Psoas muscle (tissue), 8 donors: ENCODE measurements at regions of chr1 and their contacts with region 1.

Region 1: GRCh38 chr1:231442735-231443134 is 20.6 kb upstream of the EGLN1 start:
- DNase-seq: no peak
- ATAC-seq: peak; percentile 71 to 96 (median 87)
- H3K4me3 ChIP-seq: no peak overlapping the region
- H3K27ac ChIP-seq: no peak overlapping the region
- H3K4me1 ChIP-seq: no peaks in the 10 kb centered on the region
- H3K27me3 ChIP-seq: no peaks in the 10 kb centered on the region
- CTCF ChIP-seq: no peak

Region 2: GRCh38 chr1:230948301-230948700 is 494.4 kb before region 1 on chr1:
- intact Hi-C with region 1: no loop called
- DNase-seq: no peak
- ATAC-seq: no peak
- H3K4me3 ChIP-seq: no peak overlapping the region
- H3K27ac ChIP-seq: no peak overlapping the region
- H3K4me1 ChIP-seq: no peaks in the 10 kb centered on the region
- H3K27me3 ChIP-seq: no peaks in the 10 kb centered on the region
- CTCF ChIP-seq: no peak

Region 3: DNA sequence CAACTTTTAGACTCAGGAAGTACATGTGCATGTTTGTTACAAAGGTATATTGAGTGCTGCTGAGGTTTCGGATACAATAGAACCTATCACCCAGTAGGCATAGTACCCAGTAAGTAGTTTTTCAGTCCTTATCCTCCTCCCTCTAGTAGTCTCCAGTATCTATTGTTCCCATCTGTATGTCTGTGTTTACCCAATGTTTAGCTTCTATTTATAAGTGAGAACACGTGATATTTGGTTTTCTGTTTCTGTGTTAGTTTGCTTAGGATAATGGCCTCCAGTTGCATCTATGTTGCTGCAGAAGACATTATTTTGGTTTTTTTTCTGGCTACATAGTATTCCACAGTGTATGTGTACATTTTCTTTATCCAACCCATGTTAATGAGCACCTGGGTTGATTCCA is 38.6 kb after region 1 on chr1:
- intact Hi-C with region 1: loop called in 1 of 2 experiments (anchors 5 kb)
- DNase-seq: no peak
- ATAC-seq: no peak
- H3K4me3 ChIP-seq: no peak overlapping the region
- H3K27ac ChIP-seq: no peak overlapping the region
- H3K4me1 ChIP-seq: no peaks in the 10 kb centered on the region
- H3K27me3 ChIP-seq: no peaks in the 10 kb centered on the region
- CTCF ChIP-seq: no peak

Region 4: GRCh38 chr1:231497629-231498152 is 55.0 kb after region 1 on chr1:
- intact Hi-C with region 1: loop called in 1 of 2 experiments (anchors 5 kb)
- DNase-seq: no peak
- ATAC-seq: no peak
- H3K4me3 ChIP-seq: no peak overlapping the region
- H3K27ac ChIP-seq: no peak overlapping the region
- H3K4me1 ChIP-seq: peaks cover 17% of the 10 kb centered on the region
- H3K27me3 ChIP-seq: no peaks in the 10 kb centered on the region
- CTCF ChIP-seq: no peak

Region 5: GRCh38 chr1:231512147-231512698 is 69.5 kb after region 1 on chr1:
- intact Hi-C with region 1: loop called in 1 of 2 experiments (anchors 5 kb)
- DNase-seq: no peak
- ATAC-seq: no peak
- H3K4me3 ChIP-seq: no peak overlapping the region
- H3K27ac ChIP-seq: no peak overlapping the region
- H3K4me1 ChIP-seq: peaks cover 16% of the 10 kb centered on the region
- H3K27me3 ChIP-seq: no peaks in the 10 kb centered on the region
- CTCF ChIP-seq: no peak